Activated T-helper 1 cell treated with anti-CD3 and anti-CD28 coated beads, Interleukin-12 subunit alpha, Interleukin-12 subunit beta, Interleukin-2, Interleukin-4 antibody, amounts not matched to agents 30 ng/mL and 10 ng/mL and 1 ng/mL, durations not matched to agents 14 hours and 24 hours and 36 hours (primary cell): ENCODE measurements at regions of chr2 and their contacts with region 1.

Region 1: DNA sequence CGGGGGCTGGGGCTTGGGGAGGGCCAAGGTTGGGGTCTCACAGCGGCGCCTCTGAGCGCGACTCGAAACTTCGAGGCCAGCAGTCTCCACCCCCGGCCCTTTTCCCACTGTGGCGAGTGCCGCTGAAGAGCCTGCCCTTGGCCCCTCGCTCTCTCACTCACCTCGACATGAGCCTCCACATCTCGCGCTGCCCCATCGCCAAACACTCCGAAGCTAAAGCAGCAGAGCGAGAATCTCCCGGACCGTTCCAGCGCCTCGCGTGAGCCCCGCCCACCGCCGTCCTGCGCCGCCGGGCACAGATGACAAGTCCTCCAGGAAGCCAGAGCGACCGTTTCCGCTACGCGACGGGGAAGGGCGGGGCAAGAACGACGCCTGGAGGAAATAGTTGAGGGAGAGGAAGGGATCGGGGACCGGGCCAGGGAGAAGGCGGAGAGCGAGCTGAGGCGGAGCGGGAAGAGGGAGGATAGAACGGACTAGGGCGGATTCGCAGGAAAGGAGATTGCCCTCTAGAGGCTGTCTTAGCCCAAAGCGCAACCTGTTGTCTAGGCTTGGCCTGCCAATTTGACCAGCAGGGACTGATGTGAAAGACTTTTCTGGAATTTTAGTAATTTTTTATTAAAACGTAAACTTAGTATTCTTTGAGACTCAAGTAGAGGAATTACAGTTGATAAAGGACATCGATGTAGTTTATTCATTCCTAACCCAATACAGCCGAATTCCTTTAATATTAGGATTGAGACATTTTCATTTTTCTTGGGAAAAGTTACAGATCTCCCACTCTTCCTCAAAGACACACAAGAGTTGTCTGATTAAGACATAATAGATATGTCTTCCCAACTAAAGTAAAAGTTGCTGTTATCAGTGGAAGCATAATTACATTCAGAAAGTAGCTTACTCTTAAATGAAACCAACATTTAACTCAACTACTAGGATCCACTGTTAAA is at the start of gene HIBCH:
- DNase-seq: peak; percentile 84
- H3K4me3 Mint-ChIP-seq: peak within 1 kb of the TSS; percentile 90
- H3K27ac Mint-ChIP-seq: peak within 1 kb of the TSS; percentile 91
- H3K4me1 Mint-ChIP-seq: peaks cover 47% of the 10 kb centered on the region
- H3K27me3 Mint-ChIP-seq: no peaks in the 10 kb centered on the region
- total RNA-seq, gene HIBCH: 24.6 and 27.1 TPM in 2 replicates

Region 2: GRCh38 chr2:189440947-189441708 is 878.7 kb before region 1 on chr2 and contains the start of gene WDR75:
- intact Hi-C with region 1: loop called (anchors 5 kb)
- DNase-seq: peak; percentile 89
- H3K4me3 Mint-ChIP-seq: no peak within 1 kb of the TSS
- H3K27ac Mint-ChIP-seq: peak within 1 kb of the TSS; percentile 99
- H3K4me1 Mint-ChIP-seq: peaks cover 8% of the 10 kb centered on the region
- H3K27me3 Mint-ChIP-seq: peaks cover 3% of the 10 kb centered on the region
- total RNA-seq, gene WDR75: 108 and 112 TPM in 2 replicates

Region 3: GRCh38 chr2:189783927-189784867 is 535.6 kb before region 1 on chr2 and contains the starts of genes ORMDL1 and PMS1:
- intact Hi-C with region 1: loop called (anchors 2 kb)
- DNase-seq: peak; percentile 94
- H3K4me3 Mint-ChIP-seq: peak within 1 kb of the TSS; percentile 92
- H3K27ac Mint-ChIP-seq: peak within 1 kb of the TSS; percentile 93
- H3K4me1 Mint-ChIP-seq: peaks cover 40% of the 10 kb centered on the region
- H3K27me3 Mint-ChIP-seq: no peaks in the 10 kb centered on the region
- total RNA-seq, gene ORMDL1: 78.7 and 80.1 TPM in 2 replicates
- total RNA-seq, gene PMS1: 54.4 and 55.9 TPM in 2 replicates

Region 4: GRCh38 chr2:190050003-190050402 is 269.8 kb before region 1 on chr2:
- intact Hi-C with region 1: no loop called
- DNase-seq: no peak
- H3K4me3 Mint-ChIP-seq: no peak overlapping the region
- H3K27ac Mint-ChIP-seq: no peak overlapping the region
- H3K4me1 Mint-ChIP-seq: no peaks in the 10 kb centered on the region
- H3K27me3 Mint-ChIP-seq: peaks cover 2% of the 10 kb centered on the region

Region 5: DNA sequence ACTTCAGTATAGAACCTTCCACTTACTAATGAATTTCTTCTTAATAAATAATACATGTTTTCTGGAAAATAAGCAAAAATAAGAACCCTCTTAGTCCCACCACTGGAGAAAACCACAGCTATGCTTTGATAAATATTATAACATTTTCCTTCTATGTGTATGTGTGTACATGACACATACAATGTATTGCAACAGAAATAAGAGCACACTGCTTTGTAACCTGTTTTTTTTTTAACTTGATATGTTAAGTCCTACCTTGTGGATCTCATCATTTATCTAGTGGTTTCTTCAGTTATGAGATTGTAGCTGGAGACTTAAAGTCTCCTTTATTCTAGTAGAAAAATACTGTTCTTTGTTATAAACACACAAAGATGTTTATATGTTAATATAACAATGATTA is 40.7 kb after region 1 on chr2:
- intact Hi-C with region 1: loop called (anchors 5 kb)
- DNase-seq: no peak
- H3K4me3 Mint-ChIP-seq: peak overlapping the region; percentile 81
- H3K27ac Mint-ChIP-seq: no peak overlapping the region
- H3K4me1 Mint-ChIP-seq: peaks cover 30% of the 10 kb centered on the region
- H3K27me3 Mint-ChIP-seq: no peaks in the 10 kb centered on the region

Region 6: DNA sequence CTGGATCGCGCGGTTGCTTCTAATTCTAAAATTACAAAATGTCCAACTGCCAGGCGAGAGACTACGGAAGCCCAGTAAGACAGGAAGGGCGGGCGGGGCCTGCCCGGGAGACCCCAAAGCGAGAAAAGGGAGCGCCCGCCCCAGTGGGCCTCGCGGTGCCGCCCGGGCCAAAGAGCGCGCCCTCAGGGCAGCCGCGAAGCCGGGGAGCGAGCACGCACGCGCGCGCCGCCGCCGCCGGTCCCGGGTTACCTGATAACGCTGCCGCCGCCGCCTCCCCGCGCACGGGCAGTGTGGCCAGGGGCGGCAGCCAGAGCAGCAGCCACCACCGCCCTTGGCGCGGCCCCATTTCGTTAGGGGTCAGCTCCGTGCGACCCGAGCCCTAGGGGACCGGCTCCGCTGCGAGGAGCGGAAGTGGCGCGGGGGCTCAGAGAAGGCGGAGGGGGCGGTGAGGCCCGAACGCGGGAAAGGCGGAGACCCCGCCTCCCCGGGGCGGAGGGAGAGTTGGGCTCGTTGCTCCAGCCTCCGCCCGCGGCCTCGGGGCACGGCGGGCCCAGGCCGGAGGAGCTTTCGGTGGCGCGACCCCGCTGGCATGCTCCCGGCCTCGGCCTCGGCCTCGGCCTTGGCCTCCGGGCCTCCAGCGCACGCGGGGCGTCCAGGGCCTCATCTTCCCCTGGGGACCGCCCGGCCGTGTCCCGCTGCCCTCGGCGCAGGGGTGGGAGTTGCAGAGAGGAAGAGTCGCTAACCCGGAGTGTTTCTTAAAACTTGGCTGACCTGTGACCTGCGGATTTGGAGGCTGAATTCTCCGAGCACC is 214.7 kb after region 1 on chr2 and contains the start of gene NEMP2:
- intact Hi-C with region 1: loop called (anchors 1 kb)
- DNase-seq: peak; percentile 82
- H3K4me3 Mint-ChIP-seq: peak within 1 kb of the TSS; percentile 95
- H3K27ac Mint-ChIP-seq: peak within 1 kb of the TSS; percentile 99
- H3K4me1 Mint-ChIP-seq: peaks cover 57% of the 10 kb centered on the region
- H3K27me3 Mint-ChIP-seq: no peaks in the 10 kb centered on the region
- total RNA-seq, gene NEMP2: 11.7 and 13.6 TPM in 2 replicates

Region 7: GRCh38 chr2:190718652-190719526 is 399.1 kb after region 1 on chr2:
- intact Hi-C with region 1: loop called (anchors 2 kb)
- DNase-seq: peak; percentile 16
- H3K4me3 Mint-ChIP-seq: peak overlapping the region; percentile 43
- H3K27ac Mint-ChIP-seq: peak overlapping the region; percentile 81
- H3K4me1 Mint-ChIP-seq: peaks cover 64% of the 10 kb centered on the region
- H3K27me3 Mint-ChIP-seq: no peaks in the 10 kb centered on the region